Posterior vena cava (tissue), 2 donors: ENCODE measurements at regions of chr4 and their contacts with region 1.

Region 1: DNA sequence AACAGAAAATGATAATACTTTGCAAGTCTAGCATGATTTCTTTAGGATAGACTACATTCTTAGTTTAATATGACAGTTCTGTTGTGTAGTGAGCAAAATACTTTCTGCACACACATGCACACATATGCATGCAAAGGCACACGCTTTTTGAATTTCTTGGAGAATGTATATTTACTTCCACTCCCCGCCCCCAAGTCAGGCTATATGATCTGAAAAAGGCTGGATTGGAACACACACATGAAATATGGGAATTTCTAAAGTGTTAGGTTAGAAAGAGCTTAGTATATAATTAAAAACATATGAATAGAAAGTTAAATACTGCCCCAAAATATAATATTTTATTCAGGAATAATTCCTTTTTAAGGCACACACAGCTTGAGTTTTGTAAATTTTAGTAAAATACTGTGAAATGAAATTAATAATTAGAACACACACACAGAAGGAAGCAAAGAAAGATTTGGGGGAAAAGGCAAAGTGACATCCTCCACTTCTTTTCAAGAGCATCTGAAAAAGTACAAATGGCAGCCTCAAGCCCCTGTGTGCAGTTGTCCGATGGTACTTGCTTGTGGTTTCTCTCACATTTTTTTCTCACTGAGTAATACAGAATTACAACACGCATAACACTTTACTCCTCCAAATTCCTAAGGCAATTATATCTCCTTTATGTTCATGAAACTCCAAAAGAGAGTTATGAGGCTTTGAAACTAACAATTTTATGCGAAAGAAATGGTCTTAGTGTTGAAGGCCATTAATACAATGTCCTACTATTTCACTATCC is 228.9 kb upstream of the ETNPPL start:
- DNase-seq: no peak

Region 2: GRCh38 chr4:108814326-108814725 is 177.4 kb before region 1 on chr4:
- intact Hi-C with region 1: loop called in 1 of 2 experiments (anchors 5 kb)
- DNase-seq: no peak